ENCODE measurements at regions of chr19 and their contacts with region 1.

Region 1: DNA sequence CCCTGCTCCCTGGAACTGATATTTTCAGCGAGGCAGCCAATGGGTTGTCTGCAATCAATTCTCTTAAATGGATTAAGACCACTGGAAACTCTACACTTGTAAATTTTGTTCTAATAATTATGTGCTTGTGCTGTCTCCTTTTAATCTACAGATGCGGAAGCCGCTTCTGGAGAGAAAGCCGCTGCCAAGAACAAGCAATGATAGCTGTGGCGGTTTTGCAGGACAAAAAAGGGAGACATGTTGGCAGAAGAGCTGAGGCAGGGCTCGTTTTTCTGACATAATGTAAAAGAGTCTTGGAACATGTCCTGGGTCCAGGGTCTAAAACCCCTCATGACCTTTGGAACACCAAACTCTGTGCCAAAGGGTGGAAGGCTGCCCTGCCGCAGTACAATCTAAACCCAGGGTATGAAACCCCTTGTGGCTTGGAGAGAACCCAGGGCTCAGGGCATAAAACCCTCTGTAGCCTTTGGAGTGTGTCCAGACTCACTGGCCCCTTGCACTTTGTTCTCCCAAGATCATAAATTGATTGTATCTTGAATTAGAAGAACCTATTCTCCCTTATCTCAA is 12.7 kb downstream of the ZNF417 start:
- DNase-seq: no peak
- ATAC-seq: no peak
- H3K4me3 ChIP-seq: no peak overlapping the region
- H3K4me3 Mint-ChIP-seq: no peak overlapping the region
- H3K27ac ChIP-seq: no peak overlapping the region
- H3K27ac Mint-ChIP-seq: no peak overlapping the region
- H3K4me1 ChIP-seq: no peaks in the 10 kb centered on the region
- H3K4me1 Mint-ChIP-seq: peaks cover 4% of the 10 kb centered on the region
- H3K27me3 ChIP-seq: no peaks in the 10 kb centered on the region
- H3K27me3 Mint-ChIP-seq: no peaks in the 10 kb centered on the region
- CTCF ChIP-seq: peak; percentile 34

Region 2: GRCh38 chr19:57103573-57104277 is 800.0 kb before region 1 on chr19:
- CTCF ChIA-PET with region 1: no interaction called
- POLR2A ChIA-PET with region 1: no interaction called
- intact Hi-C with region 1: loop called (anchors 5 kb)
- DNase-seq: peak; percentile 14 to 79 (median 59)
- ATAC-seq: peak; percentile 97
- H3K4me3 ChIP-seq: peak overlapping the region in 1 of 2 experiments; percentile 11
- H3K4me3 Mint-ChIP-seq: peak overlapping the region; percentile 70
- H3K27ac ChIP-seq: no peak overlapping the region
- H3K27ac Mint-ChIP-seq: no peak overlapping the region
- H3K4me1 ChIP-seq: peaks cover 4% of the 10 kb centered on the region
- H3K4me1 Mint-ChIP-seq: peaks cover 6% of the 10 kb centered on the region
- H3K27me3 ChIP-seq: peaks cover 0 to 4% of the 10 kb centered on the region in 2 experiments
- H3K27me3 Mint-ChIP-seq: peaks cover 26% of the 10 kb centered on the region
- CTCF ChIP-seq: peak; percentile 82

Region 3: GRCh38 chr19:57769345-57770131 is 134.2 kb before region 1 on chr19 and contains the start of gene ZNF586:
- CTCF ChIA-PET with region 1: no interaction called
- POLR2A ChIA-PET with region 1: no interaction called
- intact Hi-C with region 1: no loop called
- DNase-seq: peak; percentile 64 to 94 (median 86)
- ATAC-seq: peak; percentile 99
- H3K4me3 ChIP-seq: peak within 1 kb of the TSS; percentile 73 to 90
- H3K4me3 Mint-ChIP-seq: peak within 1 kb of the TSS; percentile 94
- H3K27ac ChIP-seq: peak within 1 kb of the TSS; percentile 61 to 86
- H3K27ac Mint-ChIP-seq: peak within 1 kb of the TSS; percentile 97
- H3K4me1 ChIP-seq: peaks cover 17% of the 10 kb centered on the region
- H3K4me1 Mint-ChIP-seq: peaks cover 35% of the 10 kb centered on the region
- H3K27me3 ChIP-seq: no peaks in the 10 kb centered on the region
- H3K27me3 Mint-ChIP-seq: no peaks in the 10 kb centered on the region
- CTCF ChIP-seq: no peak
- total RNA-seq, gene ZNF586: 54.0 to 57.6 TPM

Region 4: DNA sequence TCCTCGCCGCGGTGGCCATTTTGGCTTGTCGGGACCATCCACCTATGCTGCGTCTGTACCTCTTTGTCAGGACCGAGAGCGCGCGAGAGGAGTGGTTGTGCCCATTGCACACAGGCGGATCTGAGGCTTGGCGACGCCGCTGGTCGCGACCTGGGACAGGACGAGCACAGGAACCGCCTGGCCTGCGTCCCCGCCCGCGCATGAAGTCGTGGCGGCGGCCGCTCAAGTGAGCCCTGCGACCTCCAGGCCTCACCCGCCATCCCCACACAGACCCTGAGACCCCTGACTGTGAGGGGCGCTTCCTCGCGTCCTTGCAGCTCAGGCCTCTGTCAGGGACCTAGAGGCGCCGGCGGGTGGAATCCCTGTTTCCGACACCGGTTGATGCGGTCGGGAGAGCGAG is 117.4 kb before region 1 on chr19:
- CTCF ChIA-PET with region 1: no interaction called
- POLR2A ChIA-PET with region 1: no interaction called
- intact Hi-C with region 1: no loop called
- DNase-seq: no peak
- ATAC-seq: no peak
- H3K4me3 ChIP-seq: peak overlapping the region in 1 of 2 experiments; percentile 8
- H3K4me3 Mint-ChIP-seq: no peak overlapping the region
- H3K27ac ChIP-seq: no peak overlapping the region
- H3K27ac Mint-ChIP-seq: no peak overlapping the region
- H3K4me1 ChIP-seq: no peaks in the 10 kb centered on the region
- H3K4me1 Mint-ChIP-seq: peaks cover 3% of the 10 kb centered on the region
- H3K27me3 ChIP-seq: no peaks in the 10 kb centered on the region
- H3K27me3 Mint-ChIP-seq: no peaks in the 10 kb centered on the region
- CTCF ChIP-seq: no peak

Measured in CD8-positive, alpha-beta T cell (primary cell).